ENCODE measurements at regions of chr6 and their contacts with region 1.

Region 1: GRCh38 chr6:21753241-21754108 is 159.9 kb downstream of the SOX4 start:
- DNase-seq: peak; percentile 97
- ATAC-seq: peak; percentile 88
- H3K4me3 ChIP-seq: no peak overlapping the region
- H3K27ac ChIP-seq: peak overlapping the region; percentile 64
- H3K4me1 ChIP-seq: peaks cover 14% of the 10 kb centered on the region
- H3K27me3 ChIP-seq: no peaks in the 10 kb centered on the region
- CTCF ChIP-seq: no peak
- POLR2A ChIP-seq: 0 out of 2 replicates have a peak, but pooled peaks have one; percentile 22
- RAD21 ChIP-seq: no peak

Region 2: DNA sequence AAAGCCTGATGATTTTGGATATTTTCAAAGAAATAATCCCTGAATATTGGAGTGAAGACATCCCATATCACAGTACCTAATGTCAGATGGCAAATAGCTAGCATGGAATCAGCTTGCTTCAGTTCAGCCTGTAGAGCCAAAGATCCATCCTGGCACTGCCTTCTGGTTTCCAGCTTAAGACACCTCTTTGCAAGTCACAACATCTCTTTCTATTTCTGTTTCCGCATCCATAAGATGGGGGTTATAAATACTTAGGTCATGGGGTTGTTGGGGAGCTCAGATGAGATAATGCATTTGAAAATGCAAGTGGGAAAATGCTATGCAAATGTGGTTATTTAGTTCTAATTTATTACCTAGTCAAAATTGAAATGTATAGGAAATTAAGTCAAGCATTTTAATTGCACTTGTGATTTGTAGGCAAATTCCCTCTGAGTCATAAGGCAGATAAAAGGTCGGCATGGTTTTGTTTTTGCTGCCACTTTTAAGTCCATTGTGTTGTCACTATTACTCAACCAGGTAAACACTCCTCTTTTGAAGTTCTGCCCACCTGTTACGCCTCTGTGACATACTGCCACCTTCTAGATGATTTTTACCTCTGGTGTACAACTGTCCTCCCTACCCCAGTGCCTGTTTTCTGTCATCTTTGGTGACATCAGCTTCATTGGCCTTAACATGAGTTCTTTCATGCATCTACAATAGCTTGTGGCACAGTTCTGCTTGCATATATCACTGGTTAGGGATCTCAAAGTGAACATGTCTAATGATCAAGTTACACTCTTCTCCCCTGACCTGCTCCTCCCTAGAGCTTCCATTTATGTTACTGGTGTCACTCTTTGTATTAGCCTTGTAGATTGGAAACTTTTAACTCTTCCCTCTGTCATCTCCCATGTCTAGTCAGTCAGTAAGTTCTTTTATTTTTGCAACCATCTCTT is 1122.6 kb before region 1 on chr6:
- CTCF ChIA-PET with region 1: no interaction called
- POLR2A ChIA-PET with region 1: no interaction called
- dilution Hi-C with region 1: no loop called
- in situ Hi-C with region 1: no loop called
- intact Hi-C with region 1: no loop called
- DNase-seq: no peak
- ATAC-seq: no peak
- H3K4me3 ChIP-seq: no peak overlapping the region
- H3K27ac ChIP-seq: no peak overlapping the region
- H3K4me1 ChIP-seq: no peaks in the 10 kb centered on the region
- H3K27me3 ChIP-seq: no peaks in the 10 kb centered on the region
- CTCF ChIP-seq: no peak
- POLR2A ChIP-seq: no peak
- RAD21 ChIP-seq: no peak

Region 3: GRCh38 chr6:21722510-21722909 is 31.0 kb before region 1 on chr6:
- CTCF ChIA-PET with region 1: no interaction called
- POLR2A ChIA-PET with region 1: interaction called, 22 read pairs
- dilution Hi-C with region 1: no loop called
- in situ Hi-C with region 1: no loop called
- intact Hi-C with region 1: no loop called
- DNase-seq: no peak
- ATAC-seq: no peak
- H3K4me3 ChIP-seq: no peak overlapping the region
- H3K27ac ChIP-seq: no peak overlapping the region
- H3K4me1 ChIP-seq: 0 out of 2 replicates have a peak, but pooled peaks cover 2% of the 10 kb centered on the region
- H3K27me3 ChIP-seq: no peaks in the 10 kb centered on the region
- CTCF ChIP-seq: no peak
- POLR2A ChIP-seq: no peak
- RAD21 ChIP-seq: no peak